Activated CD4-positive, alpha-beta T cell treated with anti-CD3 and anti-CD28 coated beads for 36 hours (primary cell): ENCODE measurements at regions of chr10 and their contacts with region 1.

Region 1: GRCh38 chr10:80444646-80445319 is 9.3 kb upstream of the TSPAN14 start:
- DNase-seq: peak; percentile 65
- ATAC-seq: peak; percentile 83
- H3K4me3 Mint-ChIP-seq: no peak overlapping the region
- H3K27ac Mint-ChIP-seq: peak overlapping the region; percentile 48
- H3K4me1 Mint-ChIP-seq: peaks cover 64% of the 10 kb centered on the region
- H3K27me3 Mint-ChIP-seq: no peaks in the 10 kb centered on the region

Region 2: GRCh38 chr10:80408242-80409101 is 36.3 kb before region 1 on chr10 and contains the start of gene PRXL2A:
- CTCF ChIA-PET with region 1: interaction called, 8 read pairs
- POLR2A ChIA-PET with region 1: no interaction called
- intact Hi-C with region 1: loop called in 1 of 2 experiments (anchors 2 kb)
- DNase-seq: peak; percentile 91
- ATAC-seq: peak; percentile 84
- H3K4me3 Mint-ChIP-seq: peak within 1 kb of the TSS; percentile 76
- H3K27ac Mint-ChIP-seq: peak within 1 kb of the TSS; percentile 94
- H3K4me1 Mint-ChIP-seq: peaks cover 40% of the 10 kb centered on the region
- H3K27me3 Mint-ChIP-seq: no peaks in the 10 kb centered on the region
- total RNA-seq, gene PRXL2A: 15.0 to 17.6 TPM

Region 3: GRCh38 chr10:80487791-80488538 is 43.2 kb after region 1 on chr10:
- CTCF ChIA-PET with region 1: interaction called, 10 read pairs
- POLR2A ChIA-PET with region 1: no interaction called
- intact Hi-C with region 1: no loop called
- DNase-seq: peak; percentile 73
- ATAC-seq: peak; percentile 34
- H3K4me3 Mint-ChIP-seq: peak overlapping the region; percentile 54
- H3K27ac Mint-ChIP-seq: peak overlapping the region; percentile 91
- H3K4me1 Mint-ChIP-seq: peaks cover 99% of the 10 kb centered on the region
- H3K27me3 Mint-ChIP-seq: no peaks in the 10 kb centered on the region

Region 4: DNA sequence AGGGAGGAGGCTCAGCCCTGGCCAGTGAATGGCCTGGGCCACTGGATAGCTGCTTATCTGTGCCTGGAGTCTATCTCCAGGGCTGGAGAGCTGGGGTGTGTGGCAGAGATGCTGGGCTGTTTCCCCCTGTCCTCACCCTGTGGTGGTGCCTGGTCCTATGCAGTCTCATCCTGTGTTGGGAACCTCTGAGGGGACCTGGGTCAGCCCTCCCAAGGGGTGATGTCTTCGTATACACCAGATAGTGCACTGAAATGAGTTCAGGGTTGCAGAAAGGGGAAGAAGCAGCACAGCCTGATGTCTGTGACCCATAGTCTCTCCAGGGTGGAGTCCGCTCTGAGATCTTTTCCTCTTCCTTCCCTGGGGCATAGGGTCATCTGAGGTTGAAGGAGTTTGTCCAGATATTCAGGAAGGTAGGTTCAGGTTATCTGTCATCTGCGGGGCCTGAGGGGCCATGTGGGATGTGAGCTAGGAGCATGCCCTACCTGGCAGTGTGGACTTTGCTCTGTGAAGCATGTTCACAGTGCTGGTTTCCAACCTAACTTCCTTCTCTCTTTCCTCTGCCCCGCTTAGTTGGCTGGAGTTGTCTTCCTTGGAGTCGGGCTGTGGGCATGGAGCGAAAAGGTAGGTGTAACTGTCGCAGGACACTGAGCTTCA is 59.5 kb after region 1 on chr10:
- CTCF ChIA-PET with region 1: interaction called, 367 read pairs
- POLR2A ChIA-PET with region 1: interaction called, 7 read pairs
- intact Hi-C with region 1: loop called (anchors 1 kb)
- DNase-seq: no peak
- ATAC-seq: no peak
- H3K4me3 Mint-ChIP-seq: no peak overlapping the region
- H3K27ac Mint-ChIP-seq: peak overlapping the region; percentile 98
- H3K4me1 Mint-ChIP-seq: peaks cover 65% of the 10 kb centered on the region
- H3K27me3 Mint-ChIP-seq: no peaks in the 10 kb centered on the region

Region 5: DNA sequence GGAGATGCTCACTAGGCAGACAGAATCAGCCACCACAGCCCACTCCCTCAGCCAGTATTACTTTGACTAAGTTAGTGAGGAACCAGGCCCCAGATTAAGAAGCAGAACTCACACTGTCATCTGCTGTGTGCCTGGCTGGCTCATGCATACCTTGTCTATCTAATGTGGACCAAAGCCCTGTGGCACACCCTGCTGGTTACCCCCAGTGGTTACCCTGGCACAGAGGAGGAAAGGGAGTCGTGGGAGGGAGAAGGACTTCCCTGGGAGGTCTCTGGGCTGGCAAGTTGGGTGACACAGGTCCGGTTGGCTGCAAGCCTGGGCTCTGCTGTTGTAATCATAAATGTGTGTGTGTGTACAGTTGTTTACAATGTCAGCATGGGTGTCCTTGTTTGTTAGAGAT is 85.5 kb after region 1 on chr10:
- CTCF ChIA-PET with region 1: interaction called, 13 read pairs
- POLR2A ChIA-PET with region 1: no interaction called
- intact Hi-C with region 1: loop called in 1 of 2 experiments (anchors 1 kb)
- DNase-seq: peak; percentile 81
- ATAC-seq: peak; percentile 92
- H3K4me3 Mint-ChIP-seq: no peak overlapping the region
- H3K27ac Mint-ChIP-seq: peak overlapping the region; percentile 61
- H3K4me1 Mint-ChIP-seq: peaks cover 66% of the 10 kb centered on the region
- H3K27me3 Mint-ChIP-seq: no peaks in the 10 kb centered on the region

Region 6: GRCh38 chr10:80662577-80663261 is 217.9 kb after region 1 on chr10:
- CTCF ChIA-PET with region 1: interaction called, 5 read pairs
- POLR2A ChIA-PET with region 1: no interaction called
- intact Hi-C with region 1: loop called in 1 of 2 experiments (anchors 10 kb)
- DNase-seq: peak; percentile 83
- ATAC-seq: peak; percentile 74
- H3K4me3 Mint-ChIP-seq: peak overlapping the region; percentile 24
- H3K27ac Mint-ChIP-seq: no peak overlapping the region
- H3K4me1 Mint-ChIP-seq: peaks cover 2% of the 10 kb centered on the region
- H3K27me3 Mint-ChIP-seq: peaks cover 17% of the 10 kb centered on the region